ENCODE measurements at regions of chr10 and their contacts with region 1.

Region 1: DNA sequence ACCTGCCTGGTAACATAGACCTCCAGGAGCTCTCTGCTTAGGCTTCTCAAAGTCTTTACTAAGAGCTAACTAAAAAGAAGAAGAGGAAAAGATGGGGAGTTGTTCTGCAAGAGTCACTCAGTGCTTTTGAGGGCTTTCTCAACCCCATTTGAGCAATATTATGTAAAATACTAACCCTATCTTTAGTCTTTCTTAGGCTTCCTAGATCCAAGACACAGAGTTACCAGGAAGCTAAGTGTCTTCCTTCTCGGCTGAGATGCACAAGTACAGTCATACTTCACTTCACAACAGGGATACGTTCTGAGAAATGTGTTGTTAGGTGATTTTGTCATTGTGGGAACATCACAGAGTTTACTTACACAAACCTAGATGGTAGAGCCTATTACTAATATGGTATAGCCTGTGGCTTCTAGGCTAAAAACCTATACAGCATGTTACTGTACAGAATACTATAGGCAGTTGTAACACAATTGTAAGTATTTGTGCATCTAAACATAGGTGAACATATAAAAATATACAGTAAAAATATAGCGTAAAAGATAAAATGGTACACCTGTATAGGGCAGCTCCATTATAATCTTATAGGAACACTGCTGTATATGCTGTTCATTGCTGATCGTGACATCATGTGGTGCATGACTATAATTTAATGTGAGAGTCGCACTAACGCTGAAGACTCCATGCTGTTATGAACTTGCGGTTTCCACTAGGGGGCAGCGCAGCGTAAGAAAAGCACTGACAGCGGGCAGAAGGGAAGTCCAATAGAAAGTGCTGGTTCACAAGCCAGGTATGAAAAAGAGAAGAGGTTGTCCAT is 16.3 kb downstream of the ANKRD22 start:
- DNase-seq: peak; percentile 75 to 84
- H3K4me3 ChIP-seq: no peak overlapping the region
- H3K27ac ChIP-seq: no peak overlapping the region
- H3K4me1 ChIP-seq: no peaks in the 10 kb centered on the region
- H3K27me3 ChIP-seq: no peaks in the 10 kb centered on the region
- CTCF ChIP-seq: peak; percentile 82 to 92 (median 90)
- POLR2A ChIP-seq: no peak

Region 2: GRCh38 chr10:88473989-88474883 is 361.1 kb before region 1 on chr10:
- intact Hi-C with region 1: no loop called
- DNase-seq: peak; percentile 50 to 79
- H3K4me3 ChIP-seq: no peak overlapping the region
- H3K27ac ChIP-seq: peak overlapping the region; percentile 62 to 85
- H3K4me1 ChIP-seq: peaks cover 0 to 3% of the 10 kb centered on the region in 2 donors
- H3K27me3 ChIP-seq: no peaks in the 10 kb centered on the region
- CTCF ChIP-seq: peak in 1 of 3 donors; percentile 8
- POLR2A ChIP-seq: no peak

Region 3: DNA sequence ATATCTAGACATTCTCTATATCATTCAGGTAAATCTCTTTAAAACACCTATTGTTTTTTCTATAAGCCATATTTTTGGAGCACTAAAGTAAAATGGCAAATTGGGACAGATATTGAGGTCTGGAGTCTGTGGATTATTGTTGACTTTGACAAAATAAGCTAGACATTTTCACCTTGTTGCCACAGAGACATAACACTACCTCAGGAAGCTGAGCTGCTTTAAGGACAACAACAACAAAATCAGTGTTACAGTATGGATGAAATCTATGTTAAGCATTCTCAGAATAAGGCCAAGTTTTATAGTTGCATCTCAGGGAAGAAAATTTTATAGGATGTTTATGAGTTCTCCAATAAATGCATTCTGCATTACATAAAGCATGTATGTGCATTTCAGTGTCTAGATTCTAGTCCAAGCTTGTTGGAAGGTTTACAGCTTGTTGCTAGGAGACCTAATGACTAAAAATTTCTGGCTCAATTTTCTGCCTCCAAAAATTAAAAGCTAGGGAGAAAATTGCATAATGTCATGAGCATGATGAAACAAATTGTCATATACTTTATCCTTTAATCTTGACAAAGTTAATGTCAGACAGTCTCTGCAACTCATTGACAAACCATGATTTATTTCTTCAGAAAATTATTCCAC is 14.4 kb before region 1 on chr10:
- intact Hi-C with region 1: no loop called
- DNase-seq: no peak
- H3K4me3 ChIP-seq: no peak overlapping the region
- H3K27ac ChIP-seq: no peak overlapping the region
- H3K4me1 ChIP-seq: no peaks in the 10 kb centered on the region
- H3K27me3 ChIP-seq: no peaks in the 10 kb centered on the region
- CTCF ChIP-seq: no peak
- POLR2A ChIP-seq: no peak

Region 4: GRCh38 chr10:88932539-88933256 is 97.4 kb after region 1 on chr10:
- intact Hi-C with region 1: loop called (anchors 10 kb)
- DNase-seq: peak in 1 of 2 donors; percentile 82
- H3K4me3 ChIP-seq: no peak overlapping the region
- H3K27ac ChIP-seq: peak overlapping the region; percentile 33 to 62
- H3K4me1 ChIP-seq: peaks cover 0 to 4% of the 10 kb centered on the region in 2 donors
- H3K27me3 ChIP-seq: no peaks in the 10 kb centered on the region
- CTCF ChIP-seq: peak; percentile 95 to 97 (median 96)
- POLR2A ChIP-seq: no peak

Region 5: GRCh38 chr10:89301721-89302445 is 466.6 kb after region 1 on chr10 and contains the start of gene IFIT2:
- intact Hi-C with region 1: loop called (anchors 5 kb)
- DNase-seq: no peak
- H3K4me3 ChIP-seq: peak within 1 kb of the TSS; percentile 47 to 71 (median 52)
- H3K27ac ChIP-seq: peak within 1 kb of the TSS; percentile 88 to 93
- H3K4me1 ChIP-seq: no peaks in the 10 kb centered on the region
- H3K27me3 ChIP-seq: no peaks in the 10 kb centered on the region
- CTCF ChIP-seq: no peak
- POLR2A ChIP-seq: no peak
- total RNA-seq, gene IFIT2: 2.6 to 6.6 (median 3.5) TPM

Region 6: DNA sequence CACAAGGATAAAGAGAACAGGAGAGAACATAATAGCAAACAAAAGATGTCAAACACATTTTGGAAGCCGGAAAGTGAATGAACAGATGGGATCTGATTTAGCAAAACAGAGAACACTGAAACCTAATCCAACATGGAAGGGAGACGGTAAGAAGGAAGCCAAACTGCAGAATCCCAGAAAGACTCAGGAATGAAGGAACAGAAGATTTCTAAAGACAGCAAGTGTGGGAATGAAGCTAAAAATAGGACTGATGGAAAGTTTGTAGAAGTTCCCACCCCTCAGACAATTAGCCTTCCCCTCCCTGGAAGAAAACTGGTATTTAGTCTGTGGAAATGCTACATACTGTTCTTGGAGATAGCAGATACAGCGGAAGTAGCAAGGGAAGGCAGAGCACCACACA is 659.3 kb after region 1 on chr10:
- intact Hi-C with region 1: no loop called
- DNase-seq: no peak
- H3K4me3 ChIP-seq: no peak overlapping the region
- H3K27ac ChIP-seq: peak overlapping the region in 1 of 2 donors; percentile 35
- H3K4me1 ChIP-seq: no peaks in the 10 kb centered on the region
- H3K27me3 ChIP-seq: no peaks in the 10 kb centered on the region
- CTCF ChIP-seq: no peak
- POLR2A ChIP-seq: no peak

Region 7: GRCh38 chr10:89522466-89522865 is 687.2 kb after region 1 on chr10:
- intact Hi-C with region 1: no loop called
- DNase-seq: no peak
- H3K4me3 ChIP-seq: no peak overlapping the region
- H3K27ac ChIP-seq: no peak overlapping the region
- H3K4me1 ChIP-seq: no peaks in the 10 kb centered on the region
- H3K27me3 ChIP-seq: no peaks in the 10 kb centered on the region
- CTCF ChIP-seq: no peak
- POLR2A ChIP-seq: no peak

Measured in breast epithelium (tissue), 4 donors.